GM12878 (cell line): ENCODE measurements at regions of chr1 and their contacts with region 1.

Region 1: GRCh38 chr1:160504666-160505065 is 18.4 kb downstream of the SLAMF6 start:
- DNase-seq: no peak
- ATAC-seq: no peak
- H3K4me3 ChIP-seq: no peak overlapping the region
- H3K27ac ChIP-seq: no peak overlapping the region
- H3K4me1 ChIP-seq: no peaks in the 10 kb centered on the region
- H3K27me3 ChIP-seq: no peaks in the 10 kb centered on the region
- CTCF ChIP-seq: no peak
- EP300 ChIP-seq: no peak
- POLR2A ChIP-seq: no peak
- RAD21 ChIP-seq: no peak

Region 2: GRCh38 chr1:160171352-160171751 is 333.3 kb before region 1 on chr1:
- CTCF ChIA-PET with region 1: no interaction called
- POLR2A ChIA-PET with region 1: no interaction called
- RAD21 ChIA-PET with region 1: no interaction called
- SMC1A ChIA-PET with region 1: no interaction called
- in situ Hi-C with region 1: no loop called
- intact Hi-C with region 1: no loop called
- DNase-seq: no peak
- ATAC-seq: no peak
- H3K4me3 ChIP-seq: no peak overlapping the region
- H3K27ac ChIP-seq: no peak overlapping the region
- H3K4me1 ChIP-seq: peaks cover 16% of the 10 kb centered on the region
- H3K27me3 ChIP-seq: no peaks in the 10 kb centered on the region; a peak in 1 of 4 replicates
- CTCF ChIP-seq: no peak
- EP300 ChIP-seq: no peak
- POLR2A ChIP-seq: no peak
- RAD21 ChIP-seq: no peak

Region 3: DNA sequence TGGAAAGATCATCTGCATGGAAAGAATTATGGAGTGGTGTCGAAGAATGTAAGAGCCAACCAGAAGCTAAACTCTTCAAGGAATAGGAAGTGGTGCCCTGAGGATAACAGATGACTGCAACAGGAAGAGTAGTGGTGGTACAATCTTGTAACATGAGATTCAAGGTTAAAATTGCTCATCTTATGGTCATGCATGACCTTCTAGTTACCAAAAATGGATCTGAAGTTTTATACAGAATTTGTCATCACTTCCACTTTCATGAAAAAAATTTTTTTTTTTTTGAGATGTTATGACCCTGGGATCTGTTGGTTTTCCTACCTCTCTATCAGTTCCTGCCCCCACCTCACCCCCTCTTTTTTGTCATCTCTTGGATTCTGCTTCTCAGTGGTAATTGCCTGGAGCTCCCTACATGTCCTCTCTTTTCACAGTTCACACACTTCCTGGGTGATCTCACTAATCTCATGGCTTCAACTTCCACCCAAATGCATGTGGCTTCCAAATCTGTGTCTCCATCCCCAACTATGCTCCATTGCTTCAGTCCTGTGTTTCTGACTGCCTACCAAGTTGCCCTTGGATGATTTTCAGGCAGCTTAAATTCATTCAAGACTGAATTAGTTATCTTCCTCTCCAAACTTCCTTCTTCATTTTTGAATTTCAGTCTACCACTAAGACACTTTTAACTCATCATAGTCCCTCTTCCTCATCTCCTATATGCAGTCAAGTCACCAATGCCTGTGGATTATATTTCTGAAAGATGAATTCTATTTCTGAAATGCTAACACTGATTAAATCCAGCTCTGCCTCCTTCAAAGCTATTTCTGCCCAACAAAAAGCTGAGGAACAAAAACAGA is 30.0 kb before region 1 on chr1:
- CTCF ChIA-PET with region 1: no interaction called
- POLR2A ChIA-PET with region 1: interaction called, 6 read pairs
- RAD21 ChIA-PET with region 1: no interaction called
- SMC1A ChIA-PET with region 1: interaction called, 10 read pairs
- in situ Hi-C with region 1: no loop called
- intact Hi-C with region 1: no loop called
- DNase-seq: peak; percentile 47
- ATAC-seq: peak; percentile 95
- H3K4me3 ChIP-seq: no peak overlapping the region; the same call in 1 of the 2 replicates
- H3K27ac ChIP-seq: peak overlapping the region; percentile 77
- H3K4me1 ChIP-seq: peaks cover 28% of the 10 kb centered on the region
- H3K27me3 ChIP-seq: no peaks in the 10 kb centered on the region
- CTCF ChIP-seq: no peak
- EP300 ChIP-seq: no peak; a peak in 1 of 4 replicates
- POLR2A ChIP-seq: no peak
- RAD21 ChIP-seq: no peak